ENCODE measurements at regions of chr13 and their contacts with region 1.

Region 1: DNA sequence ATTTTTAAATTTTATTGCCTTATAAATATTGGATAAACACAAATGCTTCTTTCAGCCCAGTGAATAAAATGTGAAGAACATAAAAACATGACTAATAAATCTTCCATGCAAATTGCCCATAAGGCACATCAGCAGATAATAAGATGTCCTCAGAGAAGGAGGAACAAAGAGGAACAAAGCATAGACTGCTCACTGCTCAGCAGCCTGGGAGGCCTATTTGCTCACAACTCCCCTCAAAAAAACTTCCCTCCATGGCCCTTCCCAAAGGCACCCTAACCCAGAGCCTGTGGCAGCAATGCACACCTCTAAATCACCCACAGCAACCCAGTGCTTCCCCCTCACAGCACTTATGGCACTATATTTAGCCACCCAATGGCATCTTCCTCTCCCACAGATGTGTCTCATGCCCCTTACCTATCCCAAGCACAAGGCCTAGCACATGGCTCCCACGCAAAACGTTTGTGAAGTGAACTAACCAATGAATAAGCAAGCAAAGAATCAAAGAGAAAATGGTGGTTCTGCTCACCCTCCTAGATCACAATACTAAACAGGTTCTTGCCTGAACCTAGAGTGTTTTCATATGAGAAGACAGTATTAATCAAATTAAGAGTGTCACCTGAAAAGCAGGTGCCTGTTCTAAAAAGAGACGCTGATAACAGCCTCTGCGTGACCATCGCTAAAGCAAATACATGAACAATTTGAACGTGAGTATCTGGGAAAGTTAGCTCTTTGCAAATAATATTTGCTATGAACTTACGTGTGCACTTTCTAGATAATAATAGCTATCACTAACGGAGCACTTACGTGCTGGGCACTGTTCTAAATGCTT is 96.9 kb downstream of the TBC1D4 start:
- DNase-seq: no peak
- ATAC-seq: peak; percentile 51 to 72 (median 60)
- H3K4me3 ChIP-seq: no peak overlapping the region
- H3K27ac ChIP-seq: peak overlapping the region; percentile 53
- H3K4me1 ChIP-seq: peaks cover 11% of the 10 kb centered on the region
- H3K27me3 ChIP-seq: no peaks in the 10 kb centered on the region
- CTCF ChIP-seq: no peak

Region 2: GRCh38 chr13:75468098-75468497 is 83.0 kb after region 1 on chr13:
- intact Hi-C with region 1: loop called in 1 of 2 experiments (anchors 5 kb)
- DNase-seq: no peak
- ATAC-seq: peak in 1 of 4 donors; percentile 31
- H3K4me3 ChIP-seq: peak overlapping the region; percentile 39
- H3K27ac ChIP-seq: peak overlapping the region; percentile 92
- H3K4me1 ChIP-seq: peaks cover 73% of the 10 kb centered on the region
- H3K27me3 ChIP-seq: no peaks in the 10 kb centered on the region
- CTCF ChIP-seq: no peak